Activated CD4-positive, alpha-beta T cell treated with anti-CD3 and anti-CD28 coated beads for 36 hours (primary cell): ENCODE measurements at regions of chr7 and their contacts with region 1.

Region 1: DNA sequence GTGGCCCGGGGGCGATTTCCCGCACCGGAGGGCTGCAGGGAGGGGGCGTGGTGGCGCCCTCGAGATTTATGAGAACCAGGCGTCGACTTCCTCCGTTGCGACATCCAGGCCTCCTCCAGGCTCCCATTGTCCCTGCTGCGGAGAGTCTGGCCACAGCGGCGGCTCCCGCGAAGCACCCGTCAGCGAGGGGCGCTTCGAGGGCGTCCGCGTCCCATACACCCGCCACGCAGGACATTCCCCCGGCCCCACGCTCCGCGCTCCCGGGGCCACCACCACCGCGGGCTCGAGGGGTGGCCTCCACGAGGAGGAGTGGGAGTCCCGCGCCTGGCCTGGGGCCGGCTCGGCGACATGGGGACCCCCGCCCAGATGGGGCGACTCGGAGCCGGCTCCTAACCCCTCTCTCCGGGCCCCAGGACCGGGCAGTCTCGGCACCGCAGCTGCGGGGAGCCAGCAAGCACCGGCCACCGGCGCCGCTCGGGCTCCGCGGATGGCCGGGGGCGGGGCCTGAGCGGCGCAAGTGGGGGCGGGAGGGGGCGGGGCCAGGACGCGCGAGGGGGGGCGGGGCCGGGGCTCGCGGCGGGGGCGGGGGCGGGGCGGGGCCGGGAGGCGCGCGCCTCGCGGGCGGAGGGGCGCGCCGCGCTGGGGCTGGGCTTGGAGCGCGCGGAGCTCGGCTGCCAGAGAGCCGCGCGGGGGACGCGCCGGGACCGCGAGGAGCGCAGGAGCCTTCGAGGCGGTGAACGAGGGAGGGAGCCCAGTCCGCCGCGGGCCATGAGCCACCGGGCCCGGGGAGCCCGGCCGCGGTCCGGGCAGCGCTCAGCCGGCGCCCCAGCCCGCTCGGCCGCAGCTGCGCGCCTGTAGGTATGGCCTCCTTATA is at the start of gene SH2B2:
- DNase-seq: peak; percentile 63
- ATAC-seq: peak; percentile 34
- H3K4me3 Mint-ChIP-seq: peak within 1 kb of the TSS; percentile 56
- H3K27ac Mint-ChIP-seq: no peak within 1 kb of the TSS
- H3K4me1 Mint-ChIP-seq: peaks cover 34% of the 10 kb centered on the region
- H3K27me3 Mint-ChIP-seq: peaks cover 12% of the 10 kb centered on the region
- total RNA-seq, gene SH2B2: 2.7 to 3.2 TPM

Region 2: GRCh38 chr7:101784292-101785127 is 502.0 kb before region 1 on chr7:
- CTCF ChIA-PET with region 1: no interaction called
- POLR2A ChIA-PET with region 1: no interaction called
- intact Hi-C with region 1: no loop called
- DNase-seq: no peak
- ATAC-seq: peak; percentile 30
- H3K4me3 Mint-ChIP-seq: no peak overlapping the region
- H3K27ac Mint-ChIP-seq: no peak overlapping the region
- H3K4me1 Mint-ChIP-seq: peaks cover 3% of the 10 kb centered on the region
- H3K27me3 Mint-ChIP-seq: peaks cover 7% of the 10 kb centered on the region

Region 3: GRCh38 chr7:102425639-102426267 is 139.3 kb after region 1 on chr7:
- CTCF ChIA-PET with region 1: no interaction called
- POLR2A ChIA-PET with region 1: no interaction called
- intact Hi-C with region 1: loop called in 1 of 2 experiments (anchors 1 kb)
- DNase-seq: peak; percentile 91
- ATAC-seq: peak; percentile 82
- H3K4me3 Mint-ChIP-seq: peak overlapping the region; percentile 72
- H3K27ac Mint-ChIP-seq: peak overlapping the region; percentile 100
- H3K4me1 Mint-ChIP-seq: peaks cover 60% of the 10 kb centered on the region
- H3K27me3 Mint-ChIP-seq: no peaks in the 10 kb centered on the region